Heart right ventricle (tissue), 16 donors: ENCODE measurements at regions of chr10 and their contacts with region 1.

Region 1: DNA sequence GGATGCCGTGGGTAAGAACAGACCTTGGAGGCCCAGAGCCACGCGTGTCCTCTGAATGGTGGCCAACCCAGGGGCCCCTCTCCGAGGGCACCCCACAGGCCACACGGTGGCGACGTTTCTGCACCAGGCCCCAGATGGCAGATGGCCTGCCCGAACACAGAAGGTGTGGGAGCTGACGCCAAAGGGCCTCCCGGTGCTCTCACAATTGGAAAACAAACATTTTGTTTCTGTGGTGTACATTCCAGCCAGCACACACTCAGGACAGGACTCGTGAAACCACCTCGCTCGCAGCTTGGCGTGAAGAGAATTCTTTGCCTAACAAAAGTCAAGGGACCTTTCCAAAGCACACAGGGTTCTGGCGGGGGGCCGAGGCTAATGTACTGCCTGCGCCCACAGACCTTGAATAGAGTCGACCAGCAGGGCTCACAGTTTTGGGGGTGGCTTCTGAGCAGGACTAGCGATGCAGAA is 112.1 kb downstream of the FAM53B start:
- DNase-seq: peak; percentile 48 to 71
- ATAC-seq: peak; percentile 18 to 81 (median 76)
- H3K4me3 ChIP-seq: no peak overlapping the region
- H3K27ac ChIP-seq: peak overlapping the region; percentile 31 to 74 (median 63)
- H3K4me1 ChIP-seq: peaks cover 33 to 78% (median 68%) of the 10 kb centered on the region in 9 donors
- H3K27me3 ChIP-seq: no peaks in the 10 kb centered on the region
- CTCF ChIP-seq: peak; percentile 35 to 76 (median 58)

Region 2: GRCh38 chr10:124428207-124428777 is 203.8 kb before region 1 on chr10:
- intact Hi-C with region 1: no loop called
- DNase-seq: no peak
- ATAC-seq: no peak
- H3K4me3 ChIP-seq: no peak overlapping the region
- H3K27ac ChIP-seq: no peak overlapping the region
- H3K4me1 ChIP-seq: no peaks in the 10 kb centered on the region
- H3K27me3 ChIP-seq: peaks cover 0 to 46% (median 33%) of the 10 kb centered on the region in 7 donors
- CTCF ChIP-seq: no peak

Region 3: GRCh38 chr10:124539935-124540641 is 92.0 kb before region 1 on chr10:
- intact Hi-C with region 1: loop called in 4 of 10 experiments (anchors 5 kb)
- DNase-seq: peak; percentile 70 to 82
- ATAC-seq: peak; percentile 75 to 92 (median 88)
- H3K4me3 ChIP-seq: no peak overlapping the region
- H3K27ac ChIP-seq: no peak overlapping the region
- H3K4me1 ChIP-seq: peaks cover 0 to 25% (median 10%) of the 10 kb centered on the region in 9 donors
- H3K27me3 ChIP-seq: no peaks in the 10 kb centered on the region
- CTCF ChIP-seq: peak; percentile 76 to 95 (median 87)

Region 4: GRCh38 chr10:124588736-124589490 is 43.2 kb before region 1 on chr10:
- intact Hi-C with region 1: no loop called
- DNase-seq: peak; percentile 49 to 68
- ATAC-seq: peak; percentile 66 to 94 (median 86)
- H3K4me3 ChIP-seq: no peak overlapping the region
- H3K27ac ChIP-seq: peak overlapping the region in 4 of 10 donors; percentile 30 to 57 (median 44)
- H3K4me1 ChIP-seq: peaks cover 0 to 19% (median 15%) of the 10 kb centered on the region in 9 donors
- H3K27me3 ChIP-seq: no peaks in the 10 kb centered on the region
- CTCF ChIP-seq: no peak

Region 5: DNA sequence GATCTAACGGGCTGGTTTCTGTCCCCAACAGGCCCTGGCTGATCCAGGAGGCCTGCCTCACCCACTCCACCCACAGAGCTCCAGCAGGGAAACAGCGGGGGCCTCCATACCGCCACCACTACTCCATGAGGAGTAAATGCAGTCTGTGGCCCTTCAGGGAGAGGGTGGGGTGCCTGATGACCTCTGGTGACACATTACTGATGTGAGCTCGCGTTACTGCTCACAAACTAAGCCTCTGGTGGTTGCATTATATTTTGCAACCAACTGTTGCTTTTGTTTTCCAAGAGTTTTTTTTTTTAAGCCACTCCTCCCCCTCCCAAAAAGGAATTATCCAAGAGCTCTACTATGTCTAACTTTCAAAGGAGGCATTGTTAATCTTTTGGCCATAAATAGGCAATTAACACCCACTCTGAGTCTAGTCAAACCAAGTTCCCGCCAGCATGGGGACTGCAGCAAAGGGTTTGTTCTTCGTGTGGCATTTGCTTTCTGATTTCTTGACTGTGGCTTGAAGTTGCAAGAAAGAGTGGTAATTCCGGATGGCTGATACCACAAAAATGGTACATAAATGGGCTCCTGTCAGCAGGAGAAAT is 39.5 kb after region 1 on chr10:
- intact Hi-C with region 1: loop called in 2 of 10 experiments (anchors 1 to 5 kb)
- DNase-seq: peak; percentile 49 to 67
- ATAC-seq: peak; percentile 15 to 73 (median 48)
- H3K4me3 ChIP-seq: no peak overlapping the region
- H3K27ac ChIP-seq: peak overlapping the region in 9 of 10 donors; percentile 61 to 83 (median 70)
- H3K4me1 ChIP-seq: peaks cover 70 to 100% (median 97%) of the 10 kb centered on the region in 9 donors
- H3K27me3 ChIP-seq: no peaks in the 10 kb centered on the region
- CTCF ChIP-seq: peak; percentile 16 to 65 (median 39)

Region 6: DNA sequence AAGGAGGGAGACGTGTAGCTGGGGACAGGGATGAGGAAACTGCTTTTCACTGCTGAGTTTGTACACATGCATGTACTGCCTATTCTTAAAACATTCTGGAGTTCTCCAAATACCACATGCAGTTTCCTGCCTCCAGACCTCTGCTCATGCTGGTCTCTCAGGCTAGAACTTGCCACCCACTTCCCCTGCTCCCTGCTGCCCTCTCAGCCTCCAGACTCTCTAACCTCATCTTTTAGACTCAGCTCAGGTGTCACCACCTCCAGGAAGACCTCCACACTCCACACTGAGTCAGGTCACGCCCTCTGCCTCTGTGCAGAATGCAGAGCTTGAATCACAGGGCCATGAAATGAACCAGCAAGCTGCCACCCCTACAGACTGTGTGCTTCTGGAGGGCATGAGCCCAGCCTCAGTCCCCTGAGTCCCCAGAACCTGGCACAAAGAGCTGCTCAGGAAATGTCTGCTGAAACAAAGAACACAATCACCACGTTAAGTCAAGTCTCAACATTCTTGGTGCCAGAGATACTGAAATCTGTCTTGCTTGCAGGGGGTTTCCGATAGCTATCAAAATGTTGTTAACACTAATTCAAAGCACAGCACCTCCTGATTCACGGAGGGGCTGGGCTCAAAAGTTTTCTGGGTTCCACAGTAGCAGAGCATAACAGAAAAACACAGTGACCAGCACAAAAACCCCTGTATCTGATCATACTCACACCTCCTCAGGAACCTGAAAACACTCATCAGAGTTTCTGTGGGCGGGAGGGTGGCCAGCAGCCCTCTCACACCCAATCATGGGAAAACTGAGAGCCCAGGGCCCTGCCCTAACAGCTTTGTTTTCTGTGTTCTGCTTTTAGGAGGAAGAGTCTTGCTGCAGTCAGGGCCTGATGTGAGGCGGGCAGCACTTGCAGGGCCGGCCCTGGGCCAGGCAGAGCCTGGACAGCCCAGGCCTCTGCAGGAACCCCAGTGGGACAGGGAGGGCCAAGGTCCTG is 91.0 kb after region 1 on chr10:
- intact Hi-C with region 1: loop called in 1 of 10 experiments (anchors 5 kb)
- DNase-seq: peak in 1 of 2 donors; percentile 67
- ATAC-seq: peak; percentile 29 to 67 (median 50)
- H3K4me3 ChIP-seq: peak overlapping the region in 1 of 10 donors; percentile 12
- H3K27ac ChIP-seq: peak overlapping the region; percentile 65 to 90 (median 80)
- H3K4me1 ChIP-seq: peaks cover 42 to 100% (median 99%) of the 10 kb centered on the region in 9 donors
- H3K27me3 ChIP-seq: no peaks in the 10 kb centered on the region
- CTCF ChIP-seq: no peak

Region 7: GRCh38 chr10:124732931-124733570 is 101.0 kb after region 1 on chr10:
- intact Hi-C with region 1: loop called in 1 of 10 experiments (anchors 5 kb)
- DNase-seq: peak in 1 of 2 donors; percentile 57
- ATAC-seq: peak; percentile 30 to 59 (median 45)
- H3K4me3 ChIP-seq: peak overlapping the region in 2 of 10 donors; percentile 4 to 7
- H3K27ac ChIP-seq: peak overlapping the region; percentile 67 to 85 (median 80)
- H3K4me1 ChIP-seq: peaks cover 60 to 100% (median 98%) of the 10 kb centered on the region in 9 donors
- H3K27me3 ChIP-seq: no peaks in the 10 kb centered on the region
- CTCF ChIP-seq: no peak